Breast epithelium (tissue), 4 donors: ENCODE measurements at regions of chr2 and their contacts with region 1.

Region 1: DNA sequence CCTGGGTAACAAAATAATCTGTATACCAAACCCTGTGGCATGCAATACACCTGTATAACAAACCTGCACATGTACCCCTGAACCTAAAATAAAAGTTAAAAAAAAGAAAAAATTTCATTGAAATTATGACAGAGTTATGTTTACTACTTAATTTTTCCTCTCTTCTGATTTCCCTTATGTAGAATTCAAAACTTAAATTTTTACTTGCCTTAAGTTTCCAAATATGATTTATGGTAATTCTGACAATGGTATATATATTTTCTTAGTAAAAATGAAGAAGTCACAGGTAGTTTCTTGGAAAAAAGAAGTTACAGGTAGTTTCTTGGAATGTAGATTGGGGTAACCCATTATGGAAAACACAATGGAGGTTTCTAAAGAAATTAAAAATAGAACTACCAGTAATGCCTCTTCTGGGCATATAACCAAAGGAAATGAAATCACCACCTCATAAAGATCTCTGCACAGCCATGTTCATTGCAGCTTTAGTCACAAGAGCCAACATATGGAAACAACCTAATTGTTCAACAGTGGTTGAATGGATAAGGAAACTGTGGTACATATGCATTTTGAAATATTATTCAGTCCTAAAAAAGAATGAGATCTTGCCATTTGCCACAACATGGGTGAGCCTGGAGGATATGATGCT is 164.9 kb downstream of the BABAM2 start:
- DNase-seq: no peak
- H3K4me3 ChIP-seq: no peak overlapping the region
- H3K27ac ChIP-seq: no peak overlapping the region
- H3K4me1 ChIP-seq: no peaks in the 10 kb centered on the region
- H3K27me3 ChIP-seq: no peaks in the 10 kb centered on the region
- CTCF ChIP-seq: no peak
- POLR2A ChIP-seq: no peak

Region 2: DNA sequence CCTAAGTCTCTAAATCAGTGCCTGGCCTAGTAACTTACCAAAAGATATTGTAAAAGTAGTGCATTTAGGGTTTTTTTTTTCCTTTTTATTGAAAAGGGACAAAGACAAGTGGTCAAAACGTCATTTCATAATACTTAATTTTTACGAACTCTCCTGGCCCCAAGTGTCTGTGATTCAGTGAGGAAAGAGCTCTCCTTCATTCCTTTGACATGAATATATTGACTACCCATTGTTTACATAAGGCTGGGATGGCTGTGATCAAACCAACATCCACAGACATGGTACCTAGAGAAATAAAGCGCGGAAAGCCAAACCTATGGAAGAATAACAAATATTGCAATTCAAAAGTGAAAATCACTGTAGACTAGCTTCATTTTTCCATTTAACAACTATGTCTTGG is 33.5 kb after region 1 on chr2:
- intact Hi-C with region 1: loop called (anchors 2 kb)
- DNase-seq: no peak
- H3K4me3 ChIP-seq: no peak overlapping the region
- H3K27ac ChIP-seq: no peak overlapping the region
- H3K4me1 ChIP-seq: no peaks in the 10 kb centered on the region
- H3K27me3 ChIP-seq: no peaks in the 10 kb centered on the region
- CTCF ChIP-seq: no peak
- POLR2A ChIP-seq: no peak